HEK293 (cell line): ENCODE measurements at regions of chr10 and their contacts with region 1.

Region 1: GRCh38 chr10:26755443-26755903 is 58.0 kb downstream of the PDSS1 start:
- H3K4me3 ChIP-seq: no peak overlapping the region
- H3K27ac ChIP-seq: no peak overlapping the region
- H3K4me1 ChIP-seq: 0 out of 2 replicates have a peak, but pooled peaks cover 3% of the 10 kb centered on the region
- CTCF ChIP-seq: no peak

Region 2: DNA sequence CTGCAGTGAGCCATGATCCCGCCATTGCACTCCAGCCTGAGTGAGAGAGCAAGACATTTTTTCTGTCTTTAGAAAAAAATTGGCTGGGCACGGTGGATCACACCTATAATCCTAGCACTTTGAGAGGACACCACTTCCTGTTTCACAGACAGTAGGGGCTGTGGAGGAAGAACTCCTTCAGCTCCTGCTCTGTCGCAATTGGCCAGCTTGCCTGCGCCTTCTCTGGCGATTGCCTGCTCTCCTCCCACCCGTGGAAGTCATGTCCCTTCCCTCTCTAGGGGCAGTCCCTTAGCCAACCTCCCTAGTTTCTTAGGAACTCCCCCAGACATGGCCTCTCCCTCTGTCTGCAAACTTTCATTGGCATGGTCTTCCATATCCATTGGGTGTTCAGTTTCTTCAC is 49.3 kb before region 1 on chr10:
- CTCF ChIA-PET with region 1: no interaction called
- POLR2A ChIA-PET with region 1: no interaction called
- H3K4me3 ChIP-seq: no peak overlapping the region
- H3K27ac ChIP-seq: no peak overlapping the region
- H3K4me1 ChIP-seq: no peaks in the 10 kb centered on the region
- CTCF ChIP-seq: no peak

Region 3: DNA sequence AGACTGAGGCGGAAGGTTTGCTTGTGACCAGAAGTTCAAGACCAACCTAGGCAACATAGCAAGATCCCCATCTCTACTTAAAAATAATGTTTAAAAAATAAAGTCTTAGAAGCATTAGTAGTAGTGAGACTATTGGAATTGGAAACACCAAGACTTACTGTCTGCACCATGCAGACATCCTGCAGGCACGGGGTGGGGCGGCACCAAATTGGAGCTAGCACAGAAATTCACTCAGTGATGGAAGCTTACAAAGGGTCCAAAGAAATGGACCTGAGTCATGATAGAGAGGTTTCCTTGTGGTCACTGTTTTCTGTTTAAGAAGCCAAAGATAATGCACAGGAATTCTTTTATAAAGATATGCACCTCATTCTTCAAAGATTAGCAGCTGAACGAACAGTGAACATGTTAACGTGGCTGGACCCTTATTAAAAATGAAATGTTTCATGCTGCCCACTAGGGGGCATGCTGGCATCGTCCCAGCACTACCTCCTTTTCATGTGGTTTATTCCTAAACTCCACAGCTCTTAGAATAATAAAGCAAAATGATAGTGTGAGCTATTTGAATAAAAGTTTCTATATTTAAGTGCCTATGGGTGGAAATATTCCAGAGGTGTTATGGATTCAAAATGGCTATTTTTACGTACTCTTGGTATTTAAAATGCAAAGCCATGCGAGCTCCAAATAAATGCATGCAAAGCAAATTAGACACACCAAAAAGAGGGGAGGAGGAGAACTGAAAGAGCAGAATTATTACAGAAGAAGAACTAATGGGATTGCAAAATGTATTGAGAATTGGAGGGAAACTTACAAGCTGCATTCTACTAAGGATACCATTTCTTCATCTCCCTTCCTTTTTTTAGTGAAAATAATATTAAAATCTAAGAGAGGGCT is 29.4 kb before region 1 on chr10:
- CTCF ChIA-PET with region 1: interaction called, 18 read pairs
- POLR2A ChIA-PET with region 1: no interaction called
- H3K4me3 ChIP-seq: no peak overlapping the region
- H3K27ac ChIP-seq: no peak overlapping the region
- H3K4me1 ChIP-seq: no peaks in the 10 kb centered on the region
- CTCF ChIP-seq: no peak